AG04449 (cell line): ENCODE measurements at regions of chr3 and their contacts with region 1.

Region 1: DNA sequence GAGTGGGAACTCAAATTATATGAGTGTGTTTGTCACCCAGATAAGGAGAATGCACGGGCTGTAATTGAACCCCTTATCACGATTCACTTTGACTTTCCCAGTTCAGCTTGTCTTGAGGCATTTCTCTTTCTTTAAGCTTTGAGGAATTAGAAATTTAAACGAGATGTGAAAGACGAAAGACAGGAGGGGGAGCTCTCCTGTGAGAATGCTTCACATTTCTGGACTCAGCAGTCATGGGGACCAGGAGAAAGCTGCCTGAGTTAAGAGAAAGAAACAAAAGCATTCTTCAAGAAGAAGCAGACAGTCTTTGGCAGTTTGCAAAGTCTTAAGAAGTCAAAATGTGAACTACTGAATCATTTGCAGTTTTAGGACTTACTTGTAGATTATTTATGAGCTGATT is 205.6 kb downstream of the NECTIN3 start:
- DNase-seq: peak; percentile 33
- H3K4me3 ChIP-seq: no peak overlapping the region
- CTCF ChIP-seq: peak; percentile 29

Region 2: DNA sequence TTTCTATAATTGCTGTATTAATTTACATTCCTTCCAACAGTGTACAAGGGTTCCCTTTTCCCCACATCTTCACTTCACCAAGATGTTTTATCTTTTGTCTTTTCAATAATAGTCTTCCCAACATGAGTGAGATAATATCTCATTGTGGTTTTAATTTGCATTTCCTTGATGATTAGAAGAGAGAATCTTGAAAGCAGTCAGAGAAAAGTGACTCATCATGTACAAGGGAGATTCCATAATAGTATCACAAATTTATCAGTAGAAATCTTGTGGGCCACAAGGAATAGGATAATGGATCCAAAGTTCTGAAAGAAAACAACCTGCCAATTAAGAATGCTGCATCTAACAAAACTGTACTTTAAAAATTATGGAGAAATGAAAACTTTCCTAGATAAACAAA is 16.3 kb before region 1 on chr3:
- CTCF ChIA-PET with region 1: interaction called, 12 read pairs
- POLR2A ChIA-PET with region 1: no interaction called
- DNase-seq: no peak
- H3K4me3 ChIP-seq: no peak overlapping the region
- CTCF ChIP-seq: no peak

Region 3: GRCh38 chr3:111338059-111338698 is 61.0 kb after region 1 on chr3:
- CTCF ChIA-PET with region 1: interaction called, 26 read pairs
- POLR2A ChIA-PET with region 1: no interaction called
- DNase-seq: peak; percentile 29
- H3K4me3 ChIP-seq: no peak overlapping the region
- CTCF ChIP-seq: peak; percentile 74

Region 4: GRCh38 chr3:111539351-111540331 is 262.4 kb after region 1 on chr3:
- CTCF ChIA-PET with region 1: interaction called, 12 read pairs
- POLR2A ChIA-PET with region 1: no interaction called
- DNase-seq: no peak
- H3K4me3 ChIP-seq: no peak overlapping the region
- CTCF ChIP-seq: peak; percentile 76